CD4-positive, alpha-beta memory T cell (primary cell): ENCODE measurements at regions of chr6 and their contacts with region 1.

Region 1: DNA sequence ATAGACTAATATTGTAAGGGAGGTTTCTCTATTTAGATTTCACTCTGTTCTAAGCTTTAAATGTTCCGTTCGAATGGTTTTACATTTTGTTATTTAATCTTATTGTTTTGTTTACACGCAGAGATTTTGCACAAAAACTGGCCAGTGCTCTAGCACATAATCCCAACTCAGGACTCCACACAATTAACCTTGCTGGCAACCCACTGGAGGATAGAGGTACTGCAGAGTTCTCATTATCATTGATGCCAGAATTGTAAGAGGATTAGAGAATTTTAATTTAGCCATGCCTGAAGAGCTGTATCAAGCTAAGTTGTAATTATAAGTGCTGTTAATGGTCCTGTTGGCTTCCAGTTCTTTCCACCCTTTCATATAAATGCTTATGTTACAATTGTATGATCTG is 179.7 kb upstream of the SCGN start:
- DNase-seq: no peak
- H3K4me3 ChIP-seq: no peak overlapping the region
- H3K4me3 Mint-ChIP-seq: no peak overlapping the region
- H3K27ac ChIP-seq: no peak overlapping the region
- H3K27ac Mint-ChIP-seq: no peak overlapping the region
- H3K4me1 ChIP-seq: no peaks in the 10 kb centered on the region
- H3K4me1 Mint-ChIP-seq: no peaks in the 10 kb centered on the region
- H3K27me3 ChIP-seq: no peaks in the 10 kb centered on the region
- H3K27me3 Mint-ChIP-seq: no peaks in the 10 kb centered on the region

Region 2: DNA sequence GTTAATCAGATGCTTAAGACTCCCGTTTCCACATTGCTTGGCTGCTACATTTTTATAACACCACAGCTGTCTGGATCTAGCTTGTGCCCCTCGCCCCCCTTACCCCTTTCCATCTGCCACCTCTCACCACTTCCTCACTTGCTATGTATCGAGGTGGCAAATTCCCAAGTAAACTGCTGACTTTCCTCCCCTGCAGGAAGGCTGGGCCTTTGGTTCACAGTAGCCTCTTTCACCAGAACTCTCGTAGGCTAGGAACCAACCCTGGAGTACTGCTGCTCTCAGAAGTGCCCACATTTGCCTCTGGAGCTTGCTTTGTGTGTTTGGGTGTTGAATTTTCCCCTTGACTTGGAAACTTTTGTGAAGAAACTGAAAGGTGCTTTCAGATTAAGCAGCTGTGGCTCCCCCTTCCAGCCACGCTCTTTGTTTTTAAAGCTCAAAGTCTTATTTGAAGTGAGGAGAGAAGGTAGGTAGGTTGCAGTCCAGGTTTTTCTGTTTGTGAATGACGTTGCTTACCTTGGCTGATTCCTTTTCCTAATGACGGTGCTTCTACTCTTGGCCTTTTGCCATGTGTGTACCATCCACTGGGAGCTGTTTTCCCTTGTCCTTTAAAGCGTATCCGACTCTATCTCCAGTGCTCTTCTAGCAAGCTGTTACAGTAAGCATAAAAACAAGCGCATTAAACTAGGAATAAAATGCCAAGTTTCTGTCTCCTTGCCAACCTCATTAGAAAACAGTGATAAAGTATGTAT is 102.7 kb before region 1 on chr6:
- CTCF ChIA-PET with region 1: no interaction called
- POLR2A ChIA-PET with region 1: no interaction called
- intact Hi-C with region 1: loop called (anchors 5 kb)
- DNase-seq: peak in 1 of 5 donors; percentile 34
- H3K4me3 ChIP-seq: peak overlapping the region; percentile 5 to 32
- H3K4me3 Mint-ChIP-seq: peak overlapping the region; percentile 57 to 88 (median 74)
- H3K27ac ChIP-seq: peak overlapping the region; percentile 28
- H3K27ac Mint-ChIP-seq: peak overlapping the region; percentile 56 to 97 (median 81)
- H3K4me1 ChIP-seq: peaks cover 49% of the 10 kb centered on the region
- H3K4me1 Mint-ChIP-seq: peaks cover 44 to 91% (median 66%) of the 10 kb centered on the region in 4 donors
- H3K27me3 ChIP-seq: no peaks in the 10 kb centered on the region
- H3K27me3 Mint-ChIP-seq: no peaks in the 10 kb centered on the region

Region 3: DNA sequence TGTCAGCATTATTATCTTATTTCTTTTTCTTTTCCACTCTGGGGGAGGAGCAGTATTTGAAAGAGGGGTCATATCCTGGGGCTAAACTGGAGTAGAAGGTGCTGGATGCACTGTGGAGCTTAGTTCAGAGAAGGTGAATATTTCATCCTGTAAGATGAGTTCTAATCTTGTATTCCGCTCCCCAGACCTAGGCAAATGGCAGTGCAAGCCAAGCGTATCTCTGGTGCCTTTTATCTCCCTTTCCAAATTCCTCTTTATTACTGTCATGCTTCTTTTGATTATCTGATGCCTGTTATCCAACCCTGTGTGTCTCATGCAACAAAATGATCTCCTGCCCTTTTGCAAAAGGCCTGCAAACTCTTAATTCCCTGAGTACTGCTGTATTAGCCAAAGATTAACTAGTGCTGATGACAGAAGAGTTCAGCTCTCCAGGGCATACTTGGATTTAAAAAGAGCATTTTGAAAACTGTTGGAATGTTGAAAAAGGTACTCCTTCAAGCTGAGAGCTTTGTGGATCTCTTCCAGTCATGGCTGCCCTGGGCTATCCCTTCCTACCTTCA is 55.2 kb before region 1 on chr6:
- CTCF ChIA-PET with region 1: no interaction called
- POLR2A ChIA-PET with region 1: no interaction called
- intact Hi-C with region 1: no loop called
- DNase-seq: no peak
- H3K4me3 ChIP-seq: no peak overlapping the region
- H3K4me3 Mint-ChIP-seq: no peak overlapping the region
- H3K27ac ChIP-seq: no peak overlapping the region
- H3K27ac Mint-ChIP-seq: peak overlapping the region in 1 of 7 donors; percentile 1
- H3K4me1 ChIP-seq: peaks cover 12% of the 10 kb centered on the region
- H3K4me1 Mint-ChIP-seq: peaks cover 2 to 58% (median 12%) of the 10 kb centered on the region in 4 donors
- H3K27me3 ChIP-seq: no peaks in the 10 kb centered on the region
- H3K27me3 Mint-ChIP-seq: no peaks in the 10 kb centered on the region

Region 4: GRCh38 chr6:25623879-25624278 is 151.6 kb after region 1 on chr6:
- CTCF ChIA-PET with region 1: no interaction called
- POLR2A ChIA-PET with region 1: no interaction called
- intact Hi-C with region 1: no loop called
- DNase-seq: no peak
- H3K4me3 ChIP-seq: no peak overlapping the region
- H3K4me3 Mint-ChIP-seq: no peak overlapping the region
- H3K27ac ChIP-seq: no peak overlapping the region
- H3K27ac Mint-ChIP-seq: no peak overlapping the region
- H3K4me1 ChIP-seq: no peaks in the 10 kb centered on the region
- H3K4me1 Mint-ChIP-seq: no peaks in the 10 kb centered on the region
- H3K27me3 ChIP-seq: no peaks in the 10 kb centered on the region
- H3K27me3 Mint-ChIP-seq: no peaks in the 10 kb centered on the region